ENCODE measurements at regions of chr9 and their contacts with region 1.

Region 1: GRCh38 chr9:37079370-37080164 is 40.8 kb upstream of the ZCCHC7 start:
- DNase-seq: peak; percentile 92
- H3K4me3 Mint-ChIP-seq: peak overlapping the region; percentile 95
- H3K27ac Mint-ChIP-seq: peak overlapping the region; percentile 97
- H3K4me1 Mint-ChIP-seq: peaks cover 44% of the 10 kb centered on the region
- H3K27me3 Mint-ChIP-seq: peaks cover 2% of the 10 kb centered on the region

Region 2: DNA sequence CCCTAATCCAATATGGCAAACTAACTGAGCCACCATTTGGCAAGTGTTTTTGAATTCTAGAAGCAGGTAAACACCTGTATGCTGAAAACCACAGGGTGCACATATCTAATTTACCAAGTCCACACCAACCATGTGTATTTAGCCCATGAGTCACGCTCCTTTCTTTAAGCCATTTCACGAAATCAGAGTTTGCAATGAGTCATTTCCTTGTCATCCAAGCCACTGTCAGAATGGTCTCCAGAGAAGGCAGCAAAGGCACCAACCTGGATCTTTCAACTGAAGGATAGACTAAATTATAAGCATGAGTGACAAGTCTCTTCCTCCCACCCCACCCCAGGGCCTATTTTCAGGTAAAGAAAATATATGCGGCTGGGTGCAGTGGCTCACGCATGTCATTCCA is 155.5 kb before region 1 on chr9:
- intact Hi-C with region 1: no loop called
- DNase-seq: peak; percentile 12
- H3K4me3 Mint-ChIP-seq: no peak overlapping the region
- H3K27ac Mint-ChIP-seq: peak overlapping the region; percentile 77
- H3K4me1 Mint-ChIP-seq: peaks cover 58% of the 10 kb centered on the region
- H3K27me3 Mint-ChIP-seq: no peaks in the 10 kb centered on the region

Region 3: DNA sequence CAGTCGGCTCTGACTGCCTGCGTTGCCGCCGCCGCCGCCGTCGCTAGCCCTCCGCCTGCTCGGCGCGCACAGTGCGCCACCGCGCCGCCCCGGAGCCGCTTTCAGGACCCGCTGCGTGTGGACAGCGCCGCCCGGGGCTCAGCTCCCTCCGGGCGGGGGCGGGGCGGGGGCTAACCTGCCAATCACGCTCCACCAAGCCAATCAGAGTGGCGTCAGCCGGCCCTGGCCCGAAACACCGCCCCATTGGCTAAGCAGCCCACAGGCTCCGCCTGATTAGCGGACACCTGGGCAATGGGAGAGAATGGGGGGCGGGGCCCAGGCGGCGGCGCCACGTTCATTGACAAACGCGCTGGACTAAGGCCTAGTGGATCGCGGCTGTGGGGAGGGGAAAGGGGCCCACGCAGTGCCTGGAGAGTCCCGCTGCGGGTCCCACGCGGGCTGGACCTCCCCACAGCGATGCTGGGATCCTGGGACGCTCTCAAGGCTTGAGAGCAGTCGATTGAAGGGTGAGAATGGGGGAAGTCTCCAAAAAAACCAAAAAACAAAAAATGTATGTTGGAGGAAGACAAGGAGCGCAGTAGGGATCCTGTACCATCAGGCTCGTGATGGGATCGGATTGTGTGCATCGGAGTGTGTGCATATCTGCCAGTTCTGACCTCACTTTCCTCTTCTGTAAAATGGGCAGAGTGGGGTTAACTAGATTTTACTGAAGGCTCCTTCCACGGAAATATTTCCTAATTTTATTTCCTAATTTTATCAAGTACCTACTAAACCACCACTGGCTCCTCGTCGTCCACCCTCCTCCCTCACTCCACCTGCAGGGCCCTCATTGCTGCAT is 51.8 kb before region 1 on chr9:
- intact Hi-C with region 1: loop called (anchors 1 kb)
- DNase-seq: peak; percentile 80
- H3K4me3 Mint-ChIP-seq: peak overlapping the region; percentile 70
- H3K27ac Mint-ChIP-seq: peak overlapping the region; percentile 36
- H3K4me1 Mint-ChIP-seq: peaks cover 8% of the 10 kb centered on the region
- H3K27me3 Mint-ChIP-seq: peaks cover 87% of the 10 kb centered on the region

Region 4: GRCh38 chr9:37040508-37041127 is 38.9 kb before region 1 on chr9:
- intact Hi-C with region 1: no loop called
- DNase-seq: no peak
- H3K4me3 Mint-ChIP-seq: no peak overlapping the region
- H3K27ac Mint-ChIP-seq: no peak overlapping the region
- H3K4me1 Mint-ChIP-seq: peaks cover 16% of the 10 kb centered on the region
- H3K27me3 Mint-ChIP-seq: peaks cover 63% of the 10 kb centered on the region

Region 5: DNA sequence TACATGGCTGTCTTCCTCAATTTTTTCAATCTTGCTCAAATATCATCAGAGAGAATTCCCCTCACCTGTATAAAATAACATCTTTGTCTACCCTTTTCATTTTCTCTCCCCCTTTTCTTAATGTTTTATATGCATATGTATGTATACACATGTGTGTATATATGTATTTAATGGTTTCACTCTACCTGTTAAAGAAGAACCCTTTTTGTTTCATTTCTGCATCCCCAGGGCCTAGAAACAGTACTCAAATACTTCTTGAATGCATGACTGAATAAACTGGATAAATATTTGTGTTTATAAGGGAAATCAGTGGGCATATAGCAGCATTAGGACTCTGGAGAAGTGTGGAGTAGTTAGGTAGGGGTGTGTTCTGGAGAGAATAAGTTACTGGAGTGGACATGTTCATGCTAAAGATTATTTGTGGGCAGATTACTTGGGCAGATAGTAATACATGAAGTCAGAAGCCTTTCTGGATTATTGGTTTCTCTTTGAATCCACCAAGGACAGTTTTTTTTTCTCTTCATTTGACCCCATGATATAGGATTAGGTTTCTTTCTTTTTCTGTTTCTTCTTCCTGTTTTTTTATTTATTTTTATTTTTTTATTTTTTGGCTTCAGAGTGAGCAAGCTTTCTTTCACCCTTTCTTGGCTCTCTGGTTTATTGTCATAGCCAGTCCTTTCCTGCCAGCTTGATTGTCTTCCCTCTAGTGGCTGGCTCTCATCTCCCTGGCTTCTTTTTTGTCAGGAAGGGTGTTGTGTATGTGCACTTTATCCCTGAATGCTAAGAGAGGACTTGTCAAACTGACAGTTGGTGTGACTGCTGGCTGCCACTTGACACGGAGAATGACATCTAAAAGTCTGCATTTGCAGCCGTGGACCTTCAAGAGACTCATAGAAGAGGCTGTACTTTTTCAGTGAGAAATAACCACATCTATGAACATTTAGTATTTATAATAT is 130.1 kb after region 1 on chr9:
- intact Hi-C with region 1: loop called (anchors 5 kb)
- DNase-seq: no peak
- H3K4me3 Mint-ChIP-seq: no peak overlapping the region
- H3K27ac Mint-ChIP-seq: no peak overlapping the region
- H3K4me1 Mint-ChIP-seq: peaks cover 40% of the 10 kb centered on the region
- H3K27me3 Mint-ChIP-seq: no peaks in the 10 kb centered on the region

Region 6: GRCh38 chr9:37290940-37291485 is 211.4 kb after region 1 on chr9:
- intact Hi-C with region 1: loop called (anchors 2 kb)
- DNase-seq: no peak
- H3K4me3 Mint-ChIP-seq: peak overlapping the region; percentile 36
- H3K27ac Mint-ChIP-seq: peak overlapping the region; percentile 79
- H3K4me1 Mint-ChIP-seq: peaks cover 37% of the 10 kb centered on the region
- H3K27me3 Mint-ChIP-seq: no peaks in the 10 kb centered on the region